Common myeloid progenitor, CD34-positive (primary cell): ENCODE measurements at regions of chr4 and their contacts with region 1.

Region 1: GRCh38 chr4:108060164-108060563 is 70.5 kb downstream of the HADH start:
- DNase-seq: peak; percentile 56 to 80 (median 73)
- H3K4me3 ChIP-seq: no peak overlapping the region
- H3K27ac ChIP-seq: no peak overlapping the region
- H3K4me1 ChIP-seq: no peaks in the 10 kb centered on the region
- H3K27me3 ChIP-seq: peaks cover 0 to 17% (median 7%) of the 10 kb centered on the region in 5 experiments

Region 2: GRCh38 chr4:107956011-107956410 is 104.2 kb before region 1 on chr4:
- CTCF ChIA-PET with region 1: no interaction called
- POLR2A ChIA-PET with region 1: no interaction called
- DNase-seq: no peak
- H3K4me3 ChIP-seq: no peak overlapping the region
- H3K27ac ChIP-seq: no peak overlapping the region
- H3K4me1 ChIP-seq: no peaks in the 10 kb centered on the region
- H3K27me3 ChIP-seq: no peaks in the 10 kb centered on the region

Region 3: DNA sequence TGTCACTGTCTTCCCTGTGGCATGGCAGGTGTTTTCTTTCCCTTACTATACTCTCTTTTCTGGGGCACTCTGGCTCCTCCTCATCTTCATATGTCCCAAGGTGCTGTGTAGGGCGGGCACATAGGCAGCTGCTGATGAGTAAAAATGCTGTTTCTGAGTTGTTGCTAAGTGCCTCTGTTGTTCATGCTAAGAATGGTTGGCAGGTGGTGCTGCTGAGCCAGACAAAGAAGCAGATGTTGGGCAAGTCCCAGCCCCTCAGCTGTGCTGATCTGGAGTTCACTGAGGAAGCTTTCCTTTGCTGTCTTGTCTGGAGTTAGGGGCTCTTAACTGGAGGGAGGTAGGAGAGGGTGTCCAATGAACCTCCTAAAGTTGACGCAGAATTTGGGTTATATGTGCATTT is 29.8 kb before region 1 on chr4:
- CTCF ChIA-PET with region 1: interaction called, 12 read pairs
- POLR2A ChIA-PET with region 1: no interaction called
- DNase-seq: peak; percentile 39 to 71 (median 68)
- H3K4me3 ChIP-seq: no peak overlapping the region
- H3K27ac ChIP-seq: no peak overlapping the region
- H3K4me1 ChIP-seq: peaks cover 0 to 11% (median 7%) of the 10 kb centered on the region in 4 experiments
- H3K27me3 ChIP-seq: no peaks in the 10 kb centered on the region

Region 4: DNA sequence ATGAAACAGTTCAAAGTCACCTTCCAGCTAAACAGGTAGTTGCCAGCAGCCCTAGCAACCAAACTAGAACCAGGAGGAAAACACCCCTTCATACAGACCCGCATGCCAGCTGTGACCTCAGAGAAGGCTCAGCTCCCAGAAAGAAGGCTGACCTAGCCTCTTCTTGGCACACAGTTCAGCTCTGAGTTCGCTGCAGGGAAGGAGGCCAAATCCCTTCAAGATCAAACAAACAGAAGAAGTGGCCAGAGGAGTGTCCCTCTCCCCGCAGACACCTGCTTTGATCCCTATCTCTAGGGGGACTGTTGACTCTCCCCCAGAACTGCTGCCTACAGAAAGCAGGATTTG is 14.5 kb before region 1 on chr4:
- CTCF ChIA-PET with region 1: interaction called, 22 read pairs
- POLR2A ChIA-PET with region 1: no interaction called
- DNase-seq: no peak
- H3K4me3 ChIP-seq: no peak overlapping the region
- H3K27ac ChIP-seq: no peak overlapping the region
- H3K4me1 ChIP-seq: peaks cover 0 to 5% (median 0%) of the 10 kb centered on the region in 4 experiments
- H3K27me3 ChIP-seq: no peaks in the 10 kb centered on the region

Region 5: GRCh38 chr4:108570993-108571569 is 510.9 kb after region 1 on chr4:
- CTCF ChIA-PET with region 1: interaction called, 77 read pairs
- POLR2A ChIA-PET with region 1: no interaction called
- DNase-seq: no peak
- H3K4me3 ChIP-seq: no peak overlapping the region
- H3K27ac ChIP-seq: no peak overlapping the region
- H3K4me1 ChIP-seq: peaks cover 0 to 6% (median 3%) of the 10 kb centered on the region in 4 experiments
- H3K27me3 ChIP-seq: peaks cover 0 to 3% (median 0%) of the 10 kb centered on the region in 5 experiments